MCF 10A (cell line): ENCODE measurements at regions of chr7 and their contacts with region 1.

Region 1: DNA sequence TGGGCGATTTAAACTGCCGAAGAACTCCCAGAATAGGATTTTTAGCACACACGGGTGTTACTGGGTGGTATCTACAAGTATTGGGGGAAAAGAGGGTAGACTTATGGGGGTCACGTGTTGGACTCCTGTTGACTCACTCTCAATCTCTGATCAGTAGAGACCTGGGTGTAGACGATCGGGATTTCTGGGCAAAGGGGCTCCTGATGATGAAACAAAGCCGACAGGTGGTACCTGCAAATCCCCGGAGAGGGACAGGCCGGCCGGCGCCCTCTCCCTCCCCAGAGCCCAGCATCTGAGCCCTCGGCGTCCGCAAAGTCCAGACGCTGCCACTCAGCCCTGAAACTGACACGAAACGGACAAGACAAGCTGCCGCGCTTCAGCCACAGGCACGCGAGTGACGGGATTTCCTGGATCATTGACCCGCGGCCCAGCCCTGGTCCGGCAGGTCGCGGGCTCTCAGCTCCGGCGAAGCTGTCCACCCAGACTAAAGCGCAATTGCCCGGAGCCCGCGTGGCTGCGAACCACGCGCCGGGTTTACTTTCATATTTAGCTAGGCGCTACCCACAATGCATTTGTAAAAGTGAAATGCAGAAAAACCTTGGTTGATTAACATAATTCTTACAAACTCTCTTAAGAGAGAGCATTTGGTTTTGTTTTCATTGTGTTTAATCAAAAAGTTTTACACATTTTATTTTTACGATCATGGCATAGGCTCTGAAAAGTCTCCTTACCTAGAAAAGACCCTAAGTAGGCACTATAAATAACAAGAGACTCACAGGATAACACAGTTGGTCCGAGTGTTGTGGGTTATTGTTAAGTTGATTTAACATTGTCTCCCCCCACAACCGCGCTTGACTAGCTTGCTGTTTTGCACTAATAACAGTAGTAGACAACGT is 56.9 kb upstream of the EZH2 start:
- DNase-seq: peak; percentile 87
- H3K4me3 Mint-ChIP-seq: peak overlapping the region; percentile 93
- H3K27ac Mint-ChIP-seq: peak overlapping the region; percentile 98
- H3K4me1 Mint-ChIP-seq: peaks cover 6% of the 10 kb centered on the region
- H3K27me3 Mint-ChIP-seq: no peaks in the 10 kb centered on the region
- CTCF ChIP-seq: no peak

Region 2: DNA sequence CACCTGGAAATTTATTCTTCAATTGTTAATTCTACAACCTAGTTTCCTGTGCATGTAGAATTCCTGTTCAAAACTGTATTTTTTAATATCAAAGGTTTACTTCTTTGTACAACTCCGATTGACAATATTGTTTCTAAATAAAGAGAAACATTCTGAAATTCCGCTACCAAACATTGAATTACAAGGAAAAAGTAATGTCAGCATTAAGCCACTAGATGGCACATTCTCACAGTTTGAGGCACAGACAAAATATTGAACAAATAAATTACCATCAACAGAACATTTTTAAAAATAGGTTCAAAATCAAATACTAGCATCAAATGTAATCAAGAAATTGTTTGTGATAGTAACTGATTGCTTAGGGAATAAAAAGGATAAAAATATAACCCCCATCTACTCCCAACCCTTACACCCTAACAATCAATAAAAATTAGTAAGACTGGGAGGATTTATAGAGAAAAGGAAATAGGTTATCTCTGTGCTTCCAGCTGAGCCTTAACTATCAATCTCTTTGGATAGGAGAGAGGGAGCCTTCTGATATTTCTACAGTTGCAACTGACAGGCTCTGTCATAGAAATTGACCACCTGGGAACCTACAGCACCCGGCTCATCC is 437.0 kb before region 1 on chr7:
- CTCF ChIA-PET with region 1: no interaction called
- POLR2A ChIA-PET with region 1: no interaction called
- intact Hi-C with region 1: loop called (anchors 1 kb)
- DNase-seq: peak; percentile 42
- H3K4me3 Mint-ChIP-seq: no peak overlapping the region
- H3K27ac Mint-ChIP-seq: no peak overlapping the region
- H3K4me1 Mint-ChIP-seq: peaks cover 4% of the 10 kb centered on the region
- H3K27me3 Mint-ChIP-seq: peaks cover 22% of the 10 kb centered on the region
- CTCF ChIP-seq: peak; percentile 56

Region 3: DNA sequence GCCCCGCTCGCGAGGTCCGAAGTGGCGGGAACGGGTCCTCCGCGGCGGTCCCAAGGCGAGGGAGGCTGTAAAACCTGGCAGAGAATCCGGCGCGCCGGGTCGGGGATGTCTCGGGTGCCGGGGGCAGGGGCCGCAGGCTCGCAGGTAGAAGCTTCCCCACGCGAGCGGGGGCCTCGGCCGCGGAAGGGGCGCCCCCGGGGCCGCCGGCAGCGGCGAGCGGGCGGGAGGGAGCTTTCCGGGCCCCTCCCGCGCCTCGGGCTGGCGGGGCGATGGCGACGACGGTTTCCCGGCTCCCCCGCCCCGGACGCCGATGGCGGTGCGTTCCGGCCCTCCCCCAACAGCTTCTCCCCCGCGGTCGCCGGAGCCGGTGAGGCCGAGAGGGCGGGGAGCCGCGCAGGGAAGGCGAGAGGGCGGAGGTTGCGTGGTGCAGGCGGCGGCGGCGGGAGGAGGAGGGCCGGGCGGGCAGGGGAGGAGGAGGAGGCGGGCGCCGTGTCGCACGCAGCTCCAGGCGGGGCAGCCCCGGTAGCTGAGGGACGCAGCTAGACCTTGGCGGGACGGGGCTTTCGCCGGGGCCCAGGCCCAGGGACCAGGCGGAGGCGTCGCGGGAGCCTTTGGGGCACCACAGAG is 242.4 kb before region 1 on chr7 and contains the start of gene CUL1:
- CTCF ChIA-PET with region 1: no interaction called
- POLR2A ChIA-PET with region 1: interaction called, 11 read pairs
- intact Hi-C with region 1: loop called (anchors 2 kb)
- DNase-seq: peak; percentile 83
- H3K4me3 Mint-ChIP-seq: peak within 1 kb of the TSS; percentile 85
- H3K27ac Mint-ChIP-seq: peak within 1 kb of the TSS; percentile 71
- H3K4me1 Mint-ChIP-seq: peaks cover 46% of the 10 kb centered on the region
- H3K27me3 Mint-ChIP-seq: no peaks in the 10 kb centered on the region
- CTCF ChIP-seq: no peak
- total RNA-seq, gene CUL1: 41.2 and 49.2 TPM in 2 replicates

Region 4: DNA sequence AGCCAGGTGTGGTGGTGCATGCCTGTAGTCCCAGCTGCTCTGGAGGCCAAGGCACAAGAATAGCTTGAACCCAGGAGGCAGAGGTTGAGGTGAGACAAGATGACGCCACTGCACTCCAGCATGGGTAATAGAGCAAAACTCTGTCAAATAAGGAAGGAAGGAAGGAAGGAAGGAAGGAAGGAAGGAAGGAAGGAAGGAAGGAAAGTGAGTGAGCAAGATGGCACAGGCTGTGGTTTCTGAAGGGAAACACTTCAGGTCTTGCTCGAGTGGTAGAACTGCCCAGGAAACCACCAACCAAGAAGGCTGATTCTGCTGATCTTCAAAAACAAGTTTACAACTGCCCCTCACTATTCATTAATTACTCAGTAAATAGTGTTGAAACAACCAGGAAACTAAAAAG is 102.0 kb before region 1 on chr7:
- CTCF ChIA-PET with region 1: interaction called, 6 read pairs
- POLR2A ChIA-PET with region 1: interaction called, 24 read pairs
- intact Hi-C with region 1: no loop called
- DNase-seq: no peak
- H3K4me3 Mint-ChIP-seq: no peak overlapping the region
- H3K27ac Mint-ChIP-seq: peak overlapping the region; percentile 71
- H3K4me1 Mint-ChIP-seq: peaks cover 11% of the 10 kb centered on the region
- H3K27me3 Mint-ChIP-seq: no peaks in the 10 kb centered on the region
- CTCF ChIP-seq: no peak

Region 5: GRCh38 chr7:148884299-148885022 is 56.5 kb before region 1 on chr7:
- CTCF ChIA-PET with region 1: interaction called, 7 read pairs
- POLR2A ChIA-PET with region 1: interaction called, 50 read pairs
- intact Hi-C with region 1: loop called (anchors 1 kb)
- DNase-seq: peak; percentile 92
- H3K4me3 Mint-ChIP-seq: peak overlapping the region; percentile 94
- H3K27ac Mint-ChIP-seq: peak overlapping the region; percentile 76
- H3K4me1 Mint-ChIP-seq: peaks cover 12% of the 10 kb centered on the region
- H3K27me3 Mint-ChIP-seq: no peaks in the 10 kb centered on the region
- CTCF ChIP-seq: no peak

Region 6: GRCh38 chr7:148914208-148914777 is 26.7 kb before region 1 on chr7:
- CTCF ChIA-PET with region 1: interaction called, 7 read pairs
- POLR2A ChIA-PET with region 1: interaction called, 18 read pairs
- intact Hi-C with region 1: no loop called
- DNase-seq: peak; percentile 71
- H3K4me3 Mint-ChIP-seq: no peak overlapping the region
- H3K27ac Mint-ChIP-seq: no peak overlapping the region
- H3K4me1 Mint-ChIP-seq: peaks cover 10% of the 10 kb centered on the region
- H3K27me3 Mint-ChIP-seq: peaks cover 6% of the 10 kb centered on the region
- CTCF ChIP-seq: no peak

Region 7: GRCh38 chr7:148987010-148987750 is 46.2 kb after region 1 on chr7:
- CTCF ChIA-PET with region 1: no interaction called
- POLR2A ChIA-PET with region 1: interaction called, 18 read pairs
- intact Hi-C with region 1: loop called (anchors 2 kb)
- DNase-seq: peak; percentile 89
- H3K4me3 Mint-ChIP-seq: peak overlapping the region; percentile 92
- H3K27ac Mint-ChIP-seq: peak overlapping the region; percentile 80
- H3K4me1 Mint-ChIP-seq: peaks cover 29% of the 10 kb centered on the region
- H3K27me3 Mint-ChIP-seq: no peaks in the 10 kb centered on the region
- CTCF ChIP-seq: no peak

Region 8: DNA sequence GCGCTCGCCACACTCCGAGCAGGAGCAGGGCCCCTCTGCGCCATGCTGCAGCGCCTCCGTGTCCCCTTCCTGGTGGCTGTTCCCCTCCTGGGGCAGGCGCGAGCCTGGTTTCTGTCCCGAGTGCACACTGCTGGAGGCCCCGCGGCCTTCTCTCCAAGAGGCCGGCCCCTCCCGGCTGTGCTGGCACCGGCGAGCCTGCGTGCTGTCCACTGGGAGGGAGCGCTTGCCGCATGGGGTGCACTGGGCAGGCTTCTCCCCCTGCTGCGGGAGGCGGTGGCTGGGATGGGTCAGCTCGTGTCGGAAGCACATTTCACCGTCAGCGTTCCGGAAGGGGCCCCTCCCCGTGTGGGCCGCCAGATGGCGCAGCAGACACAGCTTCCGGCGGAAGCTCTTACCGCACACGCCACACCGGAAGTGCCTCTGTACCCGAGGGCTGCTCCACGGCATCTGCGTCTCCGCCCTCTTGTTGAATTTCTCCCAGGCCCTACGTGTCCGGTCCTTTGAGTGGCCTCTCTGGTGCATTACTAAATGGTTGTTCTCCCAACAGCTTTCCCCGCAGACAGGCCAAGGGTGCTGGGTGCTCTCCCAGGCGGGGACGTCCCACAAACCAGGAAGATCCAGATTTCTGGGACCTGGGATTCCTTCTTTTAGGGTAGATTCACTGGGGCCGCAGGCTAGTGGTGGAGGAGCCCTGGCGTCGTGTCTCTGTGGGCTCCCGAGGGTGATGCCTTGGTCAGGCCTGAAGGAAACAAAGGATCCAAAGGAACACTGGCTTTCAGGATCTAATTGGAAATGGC is 130.9 kb after region 1 on chr7:
- CTCF ChIA-PET with region 1: no interaction called
- POLR2A ChIA-PET with region 1: no interaction called
- intact Hi-C with region 1: no loop called
- DNase-seq: no peak
- H3K4me3 Mint-ChIP-seq: no peak overlapping the region
- H3K27ac Mint-ChIP-seq: no peak overlapping the region
- H3K4me1 Mint-ChIP-seq: peaks cover 6% of the 10 kb centered on the region
- H3K27me3 Mint-ChIP-seq: no peaks in the 10 kb centered on the region
- CTCF ChIP-seq: no peak